HEK293 (cell line): ENCODE measurements at regions of chr16 and their contacts with region 1.

Region 1: GRCh38 chr16:69754469-69755310 is at the start of gene NOB1:
- H3K4me3 ChIP-seq: peak within 1 kb of the TSS; percentile 84
- H3K27ac ChIP-seq: peak within 1 kb of the TSS; percentile 68; the same call in 1 of the 2 replicates
- H3K4me1 ChIP-seq: 0 out of 2 replicates have a peak, but pooled peaks cover 2% of the 10 kb centered on the region
- CTCF ChIP-seq: peak; percentile 98

Region 2: DNA sequence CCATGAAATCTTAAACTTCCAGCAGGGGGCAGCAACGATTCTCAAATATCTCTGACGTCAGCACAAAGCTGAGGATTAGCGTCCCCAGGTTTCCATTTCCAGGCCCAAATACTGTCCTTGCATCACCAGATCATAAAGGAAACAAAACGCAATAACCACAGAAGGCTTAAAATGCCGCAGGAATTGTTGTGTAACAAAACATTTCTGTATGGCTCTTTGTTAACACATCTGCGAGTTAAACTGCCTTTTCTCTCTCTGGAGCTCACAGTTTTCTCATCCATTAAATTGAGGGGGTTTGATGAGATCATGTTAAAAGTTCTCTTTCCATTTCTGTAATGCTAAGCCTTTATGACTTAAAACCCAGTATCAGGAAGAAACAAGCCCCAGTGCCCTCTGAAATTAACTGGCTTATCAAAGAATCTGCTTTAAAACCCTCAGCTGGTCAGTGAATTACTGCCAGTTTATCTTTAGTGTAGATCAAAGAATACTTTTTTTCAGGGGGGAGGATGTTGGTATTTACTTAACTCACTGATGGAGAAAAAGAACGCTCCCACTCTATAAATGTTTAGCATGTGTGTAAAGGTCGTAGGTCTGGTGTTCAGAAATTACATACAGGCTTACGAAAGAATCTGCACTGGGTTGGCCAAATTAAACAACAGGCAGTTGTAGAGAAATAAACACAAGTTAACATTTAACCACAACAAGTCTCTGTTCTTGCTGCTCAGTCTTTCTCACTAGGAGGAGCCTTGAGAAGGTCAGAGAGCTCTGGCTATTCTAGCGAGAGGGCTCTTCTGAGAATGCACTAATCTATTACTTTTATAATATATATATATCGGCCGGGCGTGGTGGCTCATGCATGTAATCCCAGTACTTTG is 358.3 kb before region 1 on chr16:
- CTCF ChIA-PET with region 1: interaction called, 16 read pairs
- POLR2A ChIA-PET with region 1: interaction called, 9 read pairs
- H3K4me3 ChIP-seq: no peak overlapping the region
- H3K27ac ChIP-seq: peak overlapping the region; percentile 56
- H3K4me1 ChIP-seq: peaks cover 9% of the 10 kb centered on the region
- CTCF ChIP-seq: peak; percentile 24; the same call in 1 of the 2 replicates

Region 3: DNA sequence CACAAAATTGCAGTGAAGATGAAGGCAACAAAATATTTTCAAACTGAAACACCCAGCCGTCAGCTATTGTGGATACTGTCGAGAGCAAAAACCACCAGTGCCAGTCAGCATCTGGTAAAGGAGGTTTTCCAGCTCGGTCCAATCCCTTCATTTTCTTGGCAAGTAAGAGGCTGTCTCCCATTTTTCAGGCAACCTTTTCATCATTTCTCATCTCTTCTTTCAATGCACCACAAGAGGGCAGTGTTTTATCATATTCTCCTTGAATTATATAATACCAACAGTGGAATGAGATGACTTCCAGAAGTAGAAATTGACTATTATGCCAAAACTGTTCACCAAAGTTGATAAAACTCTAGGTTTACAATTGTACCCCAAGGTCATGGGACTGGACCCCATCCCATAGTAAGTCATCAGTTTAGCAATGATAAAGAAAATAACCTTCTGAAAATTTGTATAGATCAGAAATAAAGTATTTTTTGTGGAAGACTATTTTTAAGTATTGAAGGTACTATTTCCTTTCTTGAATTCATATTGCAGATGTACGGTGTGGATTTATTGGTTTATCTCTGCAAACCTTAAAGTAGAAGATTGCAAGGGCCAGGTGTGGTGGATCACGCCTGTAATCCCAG is 45.1 kb before region 1 on chr16:
- CTCF ChIA-PET with region 1: interaction called, 37 read pairs
- POLR2A ChIA-PET with region 1: interaction called, 10 read pairs
- H3K4me3 ChIP-seq: no peak overlapping the region
- H3K27ac ChIP-seq: no peak overlapping the region
- H3K4me1 ChIP-seq: no peaks in the 10 kb centered on the region
- CTCF ChIP-seq: peak; percentile 40; the same call in 1 of the 2 replicates

Region 4: GRCh38 chr16:69726296-69727060 is 28.2 kb before region 1 on chr16 and contains the start of gene NQO1:
- CTCF ChIA-PET with region 1: interaction called, 13 read pairs
- POLR2A ChIA-PET with region 1: interaction called, 9 read pairs
- H3K4me3 ChIP-seq: peak within 1 kb of the TSS; percentile 46
- H3K27ac ChIP-seq: peak within 1 kb of the TSS; percentile 13; the same call in 1 of the 2 replicates
- H3K4me1 ChIP-seq: no peaks in the 10 kb centered on the region; the same call in 1 of the 2 replicates
- CTCF ChIP-seq: no peak

Region 5: DNA sequence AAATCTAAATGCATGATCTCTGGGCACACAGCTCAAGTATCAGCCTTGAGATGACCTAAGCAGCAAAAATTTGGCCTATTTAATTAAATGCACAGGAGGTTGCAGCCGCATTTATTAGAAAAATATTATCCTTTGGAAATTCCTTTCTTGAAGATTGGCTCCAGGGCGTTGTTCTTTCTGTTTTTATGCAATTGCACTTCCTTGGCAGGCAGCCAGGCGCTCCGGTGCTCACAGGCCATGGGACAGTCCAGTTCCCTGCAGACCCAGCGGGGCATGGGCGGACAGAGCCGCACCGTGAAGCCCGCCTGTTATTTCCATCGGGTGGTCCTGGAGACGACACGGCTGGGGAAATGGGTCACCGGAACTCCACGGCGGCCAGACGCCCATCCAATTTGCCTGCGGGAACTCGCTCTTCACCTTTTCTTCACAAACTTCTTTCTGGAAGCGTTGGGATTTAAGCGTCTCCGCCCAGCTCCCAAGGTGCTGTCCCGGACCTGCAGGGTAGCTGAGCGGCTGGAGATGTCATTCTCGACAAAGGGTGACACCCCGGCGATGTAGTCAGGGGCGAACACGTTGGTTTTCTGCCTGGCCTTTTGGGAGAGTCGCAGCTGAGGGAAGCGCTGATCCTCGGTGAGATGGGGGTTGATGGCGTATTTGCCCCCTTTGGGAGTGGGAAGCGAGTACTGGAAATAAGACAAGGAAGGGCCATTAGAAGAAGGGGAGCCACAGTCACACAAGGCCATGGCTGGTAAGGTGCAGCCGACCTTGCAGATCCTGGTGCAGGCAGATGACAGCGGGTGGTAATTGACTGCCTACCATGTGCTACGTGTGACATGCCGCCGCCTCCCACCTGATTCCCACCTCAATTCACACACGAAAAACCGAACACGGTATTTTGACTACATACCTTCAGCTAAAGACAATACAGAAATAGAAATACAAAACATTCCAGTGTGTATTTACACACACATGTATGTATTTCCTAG is 12.5 kb before region 1 on chr16:
- CTCF ChIA-PET with region 1: interaction called, 14 read pairs
- POLR2A ChIA-PET with region 1: interaction called, 12 read pairs
- H3K4me3 ChIP-seq: no peak overlapping the region
- H3K27ac ChIP-seq: peak overlapping the region; percentile 1; the same call in 1 of the 2 replicates
- H3K4me1 ChIP-seq: no peaks in the 10 kb centered on the region
- CTCF ChIP-seq: no peak

Region 6: DNA sequence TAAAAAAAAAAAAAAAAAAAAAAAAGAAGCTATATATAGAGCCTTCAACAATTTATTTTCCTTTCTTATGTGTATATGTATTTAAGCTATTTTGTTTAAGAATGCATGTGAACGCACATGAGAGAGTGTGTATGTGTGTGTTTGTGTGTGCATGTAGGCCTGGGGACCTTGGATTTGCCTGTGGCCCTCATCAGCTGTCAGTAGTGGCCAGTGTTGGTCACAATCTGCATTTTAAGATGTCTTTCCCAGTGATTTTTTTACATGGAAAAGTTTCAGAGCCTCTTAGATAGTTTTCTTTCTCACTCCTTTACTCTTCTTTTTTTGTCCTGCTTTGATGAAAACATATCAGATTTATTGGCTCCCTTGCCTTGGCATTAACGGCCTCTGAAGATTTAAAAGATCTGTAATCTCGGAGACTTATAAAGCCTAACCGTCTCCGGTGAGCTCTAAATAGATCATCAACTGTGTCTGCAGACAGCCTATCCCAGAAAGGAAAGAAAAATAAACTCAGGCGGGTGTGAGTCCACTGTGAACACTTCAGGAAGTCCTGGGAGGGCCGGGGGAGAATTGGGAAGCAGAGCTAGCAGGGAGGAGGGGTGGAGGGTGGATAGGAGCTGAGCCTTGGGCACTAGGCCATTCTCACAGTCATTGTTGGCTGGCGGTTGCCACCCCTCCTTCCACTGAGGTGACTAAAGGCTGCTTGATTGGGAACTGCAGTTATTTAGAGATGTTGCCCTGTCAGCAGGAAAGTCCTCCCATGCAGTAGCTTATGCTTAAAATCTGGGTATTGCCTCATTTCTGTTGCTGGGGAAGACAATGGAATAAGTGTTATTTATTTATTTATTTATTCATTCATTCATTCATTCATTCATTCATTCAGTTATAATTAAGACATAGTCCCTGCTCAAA is 94.2 kb after region 1 on chr16:
- CTCF ChIA-PET with region 1: no interaction called
- POLR2A ChIA-PET with region 1: no interaction called
- H3K4me3 ChIP-seq: no peak overlapping the region
- H3K27ac ChIP-seq: peak overlapping the region; percentile 51
- H3K4me1 ChIP-seq: no peaks in the 10 kb centered on the region
- CTCF ChIP-seq: no peak